ENCODE measurements at regions of chr3 and their contacts with region 1.

Region 1: DNA sequence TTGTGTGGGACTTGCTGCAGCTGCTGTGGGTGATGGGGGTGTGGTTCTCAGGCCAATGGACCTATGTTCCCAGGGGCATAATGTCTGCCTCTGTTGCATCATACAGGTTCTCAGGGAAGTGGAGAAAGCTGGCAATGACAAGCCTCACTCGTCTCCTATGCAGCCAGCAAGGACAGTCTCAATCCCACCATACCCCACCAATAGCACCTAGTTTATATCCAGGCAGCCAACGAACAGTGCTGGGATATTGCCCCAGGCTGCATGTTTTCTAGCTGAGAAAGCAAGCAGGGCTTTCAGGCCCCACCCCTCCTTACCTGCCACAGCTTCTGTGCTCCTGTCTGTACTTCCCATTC is 14.4 kb upstream of the OR5K2 start:
- DNase-seq: peak; percentile 87 to 88
- H3K4me3 ChIP-seq: peak overlapping the region; percentile 35
- H3K27ac ChIP-seq: peak overlapping the region; percentile 94
- H3K4me1 ChIP-seq: peaks cover 30% of the 10 kb centered on the region
- H3K27me3 ChIP-seq: no peaks in the 10 kb centered on the region
- CTCF ChIP-seq: no peak

Region 2: GRCh38 chr3:98513091-98513511 is 30.0 kb after region 1 on chr3:
- CTCF ChIA-PET with region 1: no interaction called
- POLR2A ChIA-PET with region 1: interaction called, 5 read pairs
- intact Hi-C with region 1: loop called (anchors 1 kb)
- DNase-seq: peak; percentile 81 to 100
- H3K4me3 ChIP-seq: 0 out of 2 replicates have a peak overlapping the region, but pooled peaks have one; percentile 19
- H3K27ac ChIP-seq: peak overlapping the region; percentile 87
- H3K4me1 ChIP-seq: peaks cover 50% of the 10 kb centered on the region
- H3K27me3 ChIP-seq: no peaks in the 10 kb centered on the region
- CTCF ChIP-seq: no peak

Region 3: GRCh38 chr3:98593046-98593936 is 110.2 kb after region 1 on chr3 and contains the start of gene CPOX:
- CTCF ChIA-PET with region 1: no interaction called
- POLR2A ChIA-PET with region 1: no interaction called
- intact Hi-C with region 1: loop called (anchors 2 kb)
- DNase-seq: peak; percentile 88 to 94
- H3K4me3 ChIP-seq: peak within 1 kb of the TSS; percentile 66
- H3K27ac ChIP-seq: peak within 1 kb of the TSS; percentile 23
- H3K4me1 ChIP-seq: peaks cover 12% of the 10 kb centered on the region
- H3K27me3 ChIP-seq: no peaks in the 10 kb centered on the region
- CTCF ChIP-seq: no peak; the same call in 1 of the 2 replicates
- total RNA-seq, gene CPOX: 30.4 and 35.2 TPM in 2 replicates

Region 4: DNA sequence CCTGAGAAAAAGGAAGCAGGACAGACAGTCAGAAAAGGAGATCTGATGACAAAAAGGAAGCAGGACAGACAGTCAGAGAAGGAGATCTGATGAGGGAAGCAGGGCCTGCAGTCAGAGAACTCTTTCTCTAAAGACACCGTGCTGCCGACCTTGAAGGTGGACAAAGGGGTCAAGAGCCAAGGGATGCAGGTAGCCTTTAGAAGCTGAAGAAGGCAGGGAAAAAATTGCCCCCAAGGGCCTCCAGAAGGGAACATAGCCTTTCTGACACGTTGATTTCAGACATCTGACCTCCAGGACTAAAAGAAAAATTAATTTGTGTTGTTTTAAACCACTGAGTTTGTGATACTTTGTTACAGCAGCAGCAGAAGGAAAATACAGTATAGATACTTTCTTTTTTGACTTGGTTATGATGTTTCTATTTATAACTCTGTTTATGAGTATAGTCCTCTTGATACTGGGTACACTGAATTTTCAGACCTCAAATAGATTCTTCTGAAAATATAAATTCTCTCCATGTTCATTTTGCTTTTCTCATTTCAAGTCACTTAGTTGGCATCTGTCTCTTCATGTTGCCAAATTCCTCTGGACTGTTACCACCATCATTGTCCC is 235.5 kb after region 1 on chr3:
- CTCF ChIA-PET with region 1: no interaction called
- POLR2A ChIA-PET with region 1: no interaction called
- intact Hi-C with region 1: no loop called
- DNase-seq: no peak
- H3K4me3 ChIP-seq: no peak overlapping the region
- H3K27ac ChIP-seq: no peak overlapping the region
- H3K4me1 ChIP-seq: no peaks in the 10 kb centered on the region
- H3K27me3 ChIP-seq: no peaks in the 10 kb centered on the region
- CTCF ChIP-seq: no peak